HCT116 (cell line): ENCODE measurements at regions of chr7 and their contacts with region 1.

Region 1: GRCh38 chr7:87506246-87507180 is 31.0 kb upstream of the ABCB4 start:
- DNase-seq: peak; percentile 15
- ATAC-seq: peak; percentile 36; the same call in 1 of the 2 replicates
- H3K4me3 ChIP-seq: no peak overlapping the region
- H3K27ac ChIP-seq: no peak overlapping the region
- H3K4me1 ChIP-seq: no peaks in the 10 kb centered on the region
- H3K27me3 ChIP-seq: no peaks in the 10 kb centered on the region
- CTCF ChIP-seq: peak; percentile 44 to 70 (median 59); a peak in 5 of 6 replicates
- POLR2A ChIP-seq: no peak
- RAD21 ChIP-seq: peak; percentile 79

Region 2: GRCh38 chr7:87517136-87517815 is 10.8 kb after region 1 on chr7:
- CTCF ChIA-PET with region 1: interaction called, 12 read pairs
- POLR2A ChIA-PET with region 1: no interaction called
- RAD21 ChIA-PET with region 1: no interaction called
- intact Hi-C with region 1: no loop called
- DNase-seq: no peak
- ATAC-seq: no peak
- H3K4me3 ChIP-seq: no peak overlapping the region
- H3K27ac ChIP-seq: no peak overlapping the region
- H3K4me1 ChIP-seq: no peaks in the 10 kb centered on the region
- H3K27me3 ChIP-seq: no peaks in the 10 kb centered on the region
- CTCF ChIP-seq: no peak
- POLR2A ChIP-seq: no peak
- RAD21 ChIP-seq: no peak

Region 3: DNA sequence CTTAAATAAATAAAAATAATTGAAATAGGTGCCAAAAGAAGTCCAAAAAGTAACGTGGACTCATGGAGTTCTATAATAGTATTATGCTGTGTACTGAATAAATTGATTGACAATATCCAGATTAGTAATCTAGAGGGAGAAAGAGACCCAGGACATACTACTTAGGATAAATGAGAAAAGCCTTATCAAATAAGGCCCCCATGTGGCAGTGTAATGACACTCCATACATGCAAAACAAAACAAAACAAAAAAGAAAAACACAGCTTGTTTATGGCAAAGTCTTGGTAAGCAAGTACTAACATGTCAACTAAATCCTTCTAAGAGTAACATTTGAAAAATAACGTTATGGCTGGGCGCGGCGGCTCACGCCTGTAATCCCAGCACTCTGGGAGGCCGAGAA is 118.1 kb after region 1 on chr7:
- CTCF ChIA-PET with region 1: interaction called, 43 read pairs
- POLR2A ChIA-PET with region 1: no interaction called
- RAD21 ChIA-PET with region 1: interaction called in 1 of 2 experiments, 4 read pairs
- intact Hi-C with region 1: loop called (anchors 1 kb)
- DNase-seq: no peak
- ATAC-seq: no peak
- H3K4me3 ChIP-seq: 0 out of 4 replicates have a peak overlapping the region, but pooled peaks of 1 of the 2 experiments have one; percentile 1
- H3K27ac ChIP-seq: no peak overlapping the region
- H3K4me1 ChIP-seq: peaks cover 4 to 11% of the 10 kb centered on the region in 2 experiments; a peak in 3 of 4 replicates
- H3K27me3 ChIP-seq: no peaks in the 10 kb centered on the region
- CTCF ChIP-seq: peak; percentile 42 to 55 (median 48); a peak in 5 of 6 replicates
- POLR2A ChIP-seq: no peak
- RAD21 ChIP-seq: peak; percentile 73

Region 4: DNA sequence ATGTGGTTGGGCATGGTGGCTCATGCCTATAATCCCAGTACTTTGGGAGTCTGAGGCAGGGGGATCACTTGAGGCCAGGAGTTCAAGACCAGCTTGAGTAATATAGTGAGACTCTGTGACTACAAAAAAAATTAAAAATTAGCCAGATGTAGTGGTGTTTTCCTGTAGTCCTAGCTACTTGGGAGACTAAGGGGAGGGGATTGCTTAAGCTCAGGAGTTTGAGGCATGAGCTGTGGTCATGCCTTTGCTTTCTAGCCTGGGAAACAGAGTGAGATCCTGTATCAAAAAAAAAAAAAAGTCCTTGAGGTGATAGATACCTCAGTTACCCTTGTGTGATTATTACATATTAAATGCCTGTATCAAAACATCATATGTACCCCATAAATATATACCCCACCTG is 253.0 kb after region 1 on chr7:
- CTCF ChIA-PET with region 1: no interaction called
- POLR2A ChIA-PET with region 1: no interaction called
- RAD21 ChIA-PET with region 1: no interaction called
- intact Hi-C with region 1: no loop called
- DNase-seq: no peak
- ATAC-seq: no peak
- H3K4me3 ChIP-seq: no peak overlapping the region
- H3K27ac ChIP-seq: no peak overlapping the region
- H3K4me1 ChIP-seq: no peaks in the 10 kb centered on the region
- H3K27me3 ChIP-seq: no peaks in the 10 kb centered on the region
- CTCF ChIP-seq: no peak
- POLR2A ChIP-seq: no peak
- RAD21 ChIP-seq: no peak

Region 5: GRCh38 chr7:87886875-87887274 is 380.4 kb after region 1 on chr7:
- CTCF ChIA-PET with region 1: interaction called, 21 read pairs
- POLR2A ChIA-PET with region 1: no interaction called
- RAD21 ChIA-PET with region 1: interaction called in 1 of 2 experiments, 3 read pairs
- intact Hi-C with region 1: loop called (anchors 1 kb)
- DNase-seq: peak; percentile 3
- ATAC-seq: no peak
- H3K4me3 ChIP-seq: no peak overlapping the region
- H3K27ac ChIP-seq: no peak overlapping the region
- H3K4me1 ChIP-seq: no peaks in the 10 kb centered on the region
- H3K27me3 ChIP-seq: no peaks in the 10 kb centered on the region
- CTCF ChIP-seq: peak in 2 of 3 experiments; percentile 37 to 53; a peak in 3 of 6 replicates
- POLR2A ChIP-seq: no peak
- RAD21 ChIP-seq: peak; percentile 68

Region 6: GRCh38 chr7:88111136-88111743 is 604.7 kb after region 1 on chr7:
- CTCF ChIA-PET with region 1: interaction called, 20 read pairs
- POLR2A ChIA-PET with region 1: no interaction called
- RAD21 ChIA-PET with region 1: interaction called in 1 of 2 experiments, 3 read pairs
- intact Hi-C with region 1: loop called (anchors 1 kb)
- DNase-seq: peak; percentile 36
- ATAC-seq: peak; percentile 40; the same call in 1 of the 2 replicates
- H3K4me3 ChIP-seq: no peak overlapping the region
- H3K27ac ChIP-seq: no peak overlapping the region
- H3K4me1 ChIP-seq: no peaks in the 10 kb centered on the region
- H3K27me3 ChIP-seq: no peaks in the 10 kb centered on the region
- CTCF ChIP-seq: peak; percentile 29 to 55 (median 55); a peak in 5 of 6 replicates
- POLR2A ChIP-seq: no peak
- RAD21 ChIP-seq: peak; percentile 79

Region 7: DNA sequence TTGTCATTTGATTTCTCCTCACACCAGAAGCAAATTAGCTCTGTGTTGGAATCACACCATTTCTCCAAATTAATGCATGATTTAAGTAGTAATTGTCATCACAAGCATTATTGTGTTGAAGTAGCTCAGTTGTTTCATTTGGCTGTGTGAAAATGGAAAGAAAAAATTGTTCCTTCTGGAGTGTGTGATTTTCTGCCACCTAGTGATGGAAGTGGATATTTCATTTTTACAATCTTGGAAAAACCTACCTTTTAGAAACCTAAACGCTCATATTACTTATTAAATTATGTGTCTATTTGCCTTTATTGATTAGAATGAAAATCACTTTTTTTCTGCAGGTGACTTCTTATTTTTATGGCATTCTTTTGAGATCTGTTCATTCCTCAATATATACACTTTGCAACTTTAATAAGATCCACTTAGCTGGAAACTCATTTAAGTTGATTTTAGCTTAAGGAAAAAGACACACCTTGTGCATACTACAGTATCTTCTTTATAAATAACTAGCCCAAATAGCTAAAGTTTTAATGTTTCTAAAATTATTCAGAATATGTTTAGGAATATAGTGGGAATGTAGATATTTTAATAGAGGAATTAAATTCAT is 663.3 kb after region 1 on chr7:
- CTCF ChIA-PET with region 1: interaction called, 7 read pairs
- POLR2A ChIA-PET with region 1: no interaction called
- RAD21 ChIA-PET with region 1: no interaction called
- intact Hi-C with region 1: loop called (anchors 2 kb)
- DNase-seq: no peak
- ATAC-seq: no peak
- H3K4me3 ChIP-seq: no peak overlapping the region
- H3K27ac ChIP-seq: no peak overlapping the region
- H3K4me1 ChIP-seq: no peaks in the 10 kb centered on the region
- H3K27me3 ChIP-seq: no peaks in the 10 kb centered on the region
- CTCF ChIP-seq: peak; percentile 23 to 66 (median 38); a peak in 3 of 6 replicates
- POLR2A ChIP-seq: no peak
- RAD21 ChIP-seq: peak; percentile 57